Aorta (tissue), 5 donors: ENCODE measurements at regions of chr9 and their contacts with region 1.

Region 1: DNA sequence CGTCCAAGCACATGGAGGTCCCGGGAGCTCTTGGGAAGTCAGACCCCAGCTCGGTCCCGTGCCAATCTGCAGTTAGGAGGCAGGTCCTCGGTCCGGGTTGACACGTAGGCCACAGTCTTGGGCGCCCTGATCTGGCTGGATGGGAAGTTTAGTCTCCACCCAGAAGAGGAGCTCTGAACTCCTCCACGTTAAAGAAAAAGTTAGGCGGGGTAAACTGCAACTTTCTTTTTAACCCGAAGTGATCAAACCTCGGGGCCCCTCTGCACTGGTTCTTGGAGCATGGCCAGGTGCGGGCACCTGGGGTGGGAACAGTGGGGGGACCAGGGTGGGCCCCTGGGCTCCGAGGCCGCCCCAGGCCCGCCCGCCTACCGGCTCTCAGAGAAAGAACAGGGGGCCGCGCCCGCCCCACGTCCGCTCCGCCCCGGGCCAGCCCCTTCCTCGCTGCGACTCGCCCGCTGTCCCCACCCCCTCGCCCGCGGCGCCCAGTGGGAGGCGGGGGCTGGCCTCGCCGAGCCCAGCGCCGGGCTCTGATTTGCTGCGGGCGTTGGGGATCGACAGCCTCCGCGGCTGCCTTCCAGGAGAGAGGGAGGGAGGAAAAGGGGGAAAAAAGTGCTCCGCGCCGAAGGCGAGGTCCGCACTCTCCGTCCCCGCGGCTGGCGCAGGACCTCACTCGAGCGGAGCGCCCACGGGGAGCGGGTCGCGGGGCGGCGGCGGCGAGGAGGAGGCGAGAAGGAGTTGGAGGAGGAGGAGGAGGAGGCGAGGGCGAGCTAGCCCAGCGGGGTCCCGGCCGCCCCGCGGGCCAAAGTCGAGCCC is at the start of gene COL5A1:
- DNase-seq: peak; percentile 94 to 97
- ATAC-seq: peak; percentile 90
- H3K4me3 ChIP-seq: peak within 1 kb of the TSS; percentile 84 to 87
- H3K27ac ChIP-seq: peak within 1 kb of the TSS; percentile 29 to 93
- H3K4me1 ChIP-seq: no peaks in the 10 kb centered on the region
- H3K27me3 ChIP-seq: no peaks in the 10 kb centered on the region
- total RNA-seq, gene COL5A1: 108 to 159 TPM

Region 2: GRCh38 chr9:134163353-134164196 is 477.8 kb before region 1 on chr9:
- intact Hi-C with region 1: loop called in 1 of 2 experiments (anchors 5 kb)
- DNase-seq: peak; percentile 81 to 89
- ATAC-seq: no peak
- H3K4me3 ChIP-seq: no peak overlapping the region
- H3K27ac ChIP-seq: peak overlapping the region; percentile 57 to 72
- H3K4me1 ChIP-seq: no peaks in the 10 kb centered on the region
- H3K27me3 ChIP-seq: no peaks in the 10 kb centered on the region

Region 3: DNA sequence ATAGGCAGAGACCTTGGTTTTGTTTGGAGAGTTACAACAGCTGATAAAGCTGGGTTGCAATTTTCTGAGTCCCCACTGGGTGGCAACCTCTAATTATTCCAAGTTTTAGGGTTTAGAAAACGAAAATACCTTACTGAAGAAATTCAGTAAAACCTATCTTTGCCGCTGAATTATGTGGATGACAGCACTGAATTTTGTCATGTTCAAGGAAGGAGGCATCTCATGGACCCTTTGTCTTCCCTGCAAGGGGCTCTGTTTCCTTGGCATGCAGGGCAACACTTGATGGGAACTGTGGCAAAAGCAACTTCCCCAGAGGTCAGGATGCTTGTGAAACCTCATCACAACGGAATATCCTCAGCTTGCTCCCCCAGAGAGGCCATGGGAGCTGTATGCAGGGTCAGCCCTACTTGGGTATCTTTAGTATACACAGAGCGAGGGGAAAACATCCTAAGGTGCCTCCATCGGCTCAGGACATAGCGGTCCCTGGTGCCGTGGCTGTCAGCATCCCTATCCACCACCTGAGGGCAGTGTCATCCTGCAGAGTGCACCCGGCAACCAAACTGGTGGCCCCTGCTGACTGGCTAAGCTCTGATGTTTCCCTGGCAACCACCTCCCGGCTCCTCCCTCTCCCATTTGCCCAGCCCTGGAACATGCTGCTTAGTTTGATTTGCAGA is 192.0 kb before region 1 on chr9:
- intact Hi-C with region 1: loop called (anchors 1 to 5 kb)
- DNase-seq: peak; percentile 95
- ATAC-seq: peak; percentile 96
- H3K4me3 ChIP-seq: no peak overlapping the region
- H3K27ac ChIP-seq: no peak overlapping the region
- H3K4me1 ChIP-seq: no peaks in the 10 kb centered on the region
- H3K27me3 ChIP-seq: no peaks in the 10 kb centered on the region

Region 4: GRCh38 chr9:134475011-134475790 is 166.2 kb before region 1 on chr9:
- intact Hi-C with region 1: loop called in 1 of 2 experiments (anchors 2 kb)
- DNase-seq: peak; percentile 89 to 90
- ATAC-seq: peak; percentile 59
- H3K4me3 ChIP-seq: no peak overlapping the region
- H3K27ac ChIP-seq: peak overlapping the region in 1 of 2 donors; percentile 45
- H3K4me1 ChIP-seq: peaks cover 0 to 4% of the 10 kb centered on the region in 2 donors
- H3K27me3 ChIP-seq: no peaks in the 10 kb centered on the region

Region 5: GRCh38 chr9:134585746-134586706 is 55.4 kb before region 1 on chr9:
- intact Hi-C with region 1: no loop called
- DNase-seq: peak in 1 of 2 donors; percentile 77
- ATAC-seq: no peak
- H3K4me3 ChIP-seq: no peak overlapping the region
- H3K27ac ChIP-seq: no peak overlapping the region
- H3K4me1 ChIP-seq: no peaks in the 10 kb centered on the region
- H3K27me3 ChIP-seq: no peaks in the 10 kb centered on the region

Region 6: GRCh38 chr9:134602547-134603309 is 38.7 kb before region 1 on chr9:
- intact Hi-C with region 1: loop called in 1 of 2 experiments (anchors 5 kb)
- DNase-seq: peak; percentile 92 to 93
- ATAC-seq: peak; percentile 81
- H3K4me3 ChIP-seq: no peak overlapping the region
- H3K27ac ChIP-seq: peak overlapping the region in 1 of 2 donors; percentile 9
- H3K4me1 ChIP-seq: no peaks in the 10 kb centered on the region
- H3K27me3 ChIP-seq: no peaks in the 10 kb centered on the region

Region 7: GRCh38 chr9:134707031-134707680 is 65.8 kb after region 1 on chr9:
- intact Hi-C with region 1: no loop called
- DNase-seq: peak; percentile 88 to 94
- ATAC-seq: peak; percentile 84
- H3K4me3 ChIP-seq: no peak overlapping the region
- H3K27ac ChIP-seq: peak overlapping the region; percentile 10 to 84
- H3K4me1 ChIP-seq: no peaks in the 10 kb centered on the region
- H3K27me3 ChIP-seq: no peaks in the 10 kb centered on the region

Region 8: DNA sequence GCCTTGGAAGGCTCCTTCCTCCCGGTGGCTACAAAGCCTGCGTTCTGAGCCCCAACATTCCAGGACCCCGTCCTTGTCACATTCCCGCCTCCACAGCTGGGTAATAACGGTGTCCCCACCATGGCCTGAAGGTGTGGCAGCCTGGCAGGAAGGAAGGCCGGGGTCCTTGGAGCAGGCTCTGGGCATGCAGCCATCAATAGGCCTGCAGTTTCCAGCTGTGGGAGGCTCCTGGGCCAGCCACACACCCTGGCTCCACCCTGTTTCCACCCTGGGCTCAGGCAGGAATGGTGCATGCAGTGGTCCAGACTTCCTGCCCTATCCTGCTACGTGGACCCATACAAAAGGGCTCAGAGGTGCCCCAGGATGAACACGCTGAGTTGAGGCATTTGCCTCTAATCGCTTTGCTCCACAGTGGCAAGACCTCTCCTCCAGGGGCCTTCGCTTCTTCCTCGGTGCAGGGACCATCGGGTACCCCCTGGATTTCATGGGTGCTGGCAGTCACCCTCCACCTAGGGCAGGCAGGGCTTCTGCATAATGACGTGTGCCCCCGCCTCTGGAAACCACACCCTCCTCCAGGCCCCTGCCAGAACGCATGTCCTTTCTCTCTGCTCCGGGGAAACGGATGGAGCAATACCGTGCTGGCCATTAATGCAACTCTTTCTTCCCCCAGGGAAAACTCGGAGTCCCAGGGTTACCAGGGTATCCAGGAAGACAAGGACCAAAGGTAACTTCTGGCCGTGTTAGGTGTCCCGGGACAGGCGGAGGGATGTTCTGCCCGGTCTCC is 144.1 kb after region 1 on chr9:
- intact Hi-C with region 1: no loop called
- DNase-seq: no peak
- ATAC-seq: peak; percentile 28
- H3K4me3 ChIP-seq: no peak overlapping the region
- H3K27ac ChIP-seq: no peak overlapping the region
- H3K4me1 ChIP-seq: no peaks in the 10 kb centered on the region
- H3K27me3 ChIP-seq: no peaks in the 10 kb centered on the region